ENCODE measurements at regions of chr19 and their contacts with region 1.

Region 1: DNA sequence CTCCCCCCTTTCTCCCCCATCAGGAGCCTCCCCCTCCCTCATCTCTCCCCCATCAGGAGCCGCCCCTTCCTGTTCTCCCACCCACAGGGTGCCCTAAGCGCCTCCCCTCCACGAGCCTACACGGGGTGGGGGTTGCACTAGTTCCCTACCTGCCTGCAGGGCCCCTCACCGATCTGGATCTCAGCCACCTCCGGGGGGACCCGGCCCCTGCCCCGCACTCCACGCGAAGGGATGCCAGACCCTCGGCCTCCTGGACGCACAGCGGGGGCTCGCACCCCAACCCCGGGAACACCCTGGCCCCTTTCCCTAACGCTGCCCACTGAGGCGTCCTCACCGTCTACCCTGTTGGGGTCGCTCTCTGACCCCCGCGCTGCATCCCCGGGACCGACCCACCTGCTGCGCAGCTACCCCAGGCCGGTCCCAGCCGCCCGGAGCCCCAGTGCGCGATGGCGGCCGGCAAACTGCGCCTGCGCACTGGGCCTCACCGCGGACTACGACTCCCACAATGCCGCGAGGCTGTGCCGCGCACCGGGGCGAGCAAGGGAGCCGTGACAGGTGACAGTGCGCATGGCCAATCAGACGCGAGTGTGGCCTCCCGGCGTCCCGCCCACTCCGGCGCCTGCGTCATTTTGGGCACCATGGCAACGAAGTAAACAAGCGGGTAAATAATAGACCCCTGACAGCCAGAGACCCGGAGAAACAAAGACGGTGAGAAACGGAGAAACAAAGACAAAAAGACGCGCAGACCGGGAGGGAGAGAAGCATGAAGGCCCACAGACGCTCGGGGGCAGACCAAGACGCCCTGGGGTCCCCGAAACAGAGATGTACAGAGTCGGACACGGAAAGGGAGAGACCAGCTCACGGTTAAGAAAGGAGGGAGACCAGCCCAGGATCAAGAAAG is at the start of gene ZSCAN18:
- DNase-seq: peak; percentile 97 to 98
- H3K4me3 ChIP-seq: peak within 1 kb of the TSS; percentile 92 to 98
- H3K27ac ChIP-seq: peak within 1 kb of the TSS; percentile 96 to 99
- H3K4me1 ChIP-seq: peaks cover 0 to 24% (median 16%) of the 10 kb centered on the region in 4 donors
- H3K27me3 ChIP-seq: no peaks in the 10 kb centered on the region
- CTCF ChIP-seq: no peak

Region 2: GRCh38 chr19:58002384-58003173 is 95.5 kb before region 1 on chr19 and contains the start of gene ZNF606:
- intact Hi-C with region 1: loop called (anchors 5 kb)
- DNase-seq: peak; percentile 83 to 90
- H3K4me3 ChIP-seq: peak within 1 kb of the TSS; percentile 82 to 94
- H3K27ac ChIP-seq: peak within 1 kb of the TSS; percentile 92 to 93
- H3K4me1 ChIP-seq: peaks cover 0 to 25% (median 17%) of the 10 kb centered on the region in 4 donors
- H3K27me3 ChIP-seq: no peaks in the 10 kb centered on the region
- CTCF ChIP-seq: no peak

Region 3: GRCh38 chr19:58059671-58060078 is 38.4 kb before region 1 on chr19:
- intact Hi-C with region 1: loop called (anchors 5 kb)
- DNase-seq: no peak
- H3K4me3 ChIP-seq: peak overlapping the region; percentile 66 to 67
- H3K27ac ChIP-seq: peak overlapping the region; percentile 85 to 92
- H3K4me1 ChIP-seq: peaks cover 0 to 12% (median 11%) of the 10 kb centered on the region in 4 donors
- H3K27me3 ChIP-seq: no peaks in the 10 kb centered on the region
- CTCF ChIP-seq: no peak

Measured in tibial artery (tissue), 4 donors.